ENCODE measurements at regions of chr15 and their contacts with region 1.

Region 1: GRCh38 chr15:66251790-66252684 is 1.5 kb downstream of the MEGF11 start:
- DNase-seq: peak in 4 of 5 donors; percentile 21 to 40 (median 29)
- H3K4me3 ChIP-seq: peak overlapping the region; percentile 47 to 52
- H3K4me3 Mint-ChIP-seq: peak overlapping the region; percentile 74 to 86 (median 80)
- H3K27ac ChIP-seq: no peak overlapping the region
- H3K27ac Mint-ChIP-seq: peak overlapping the region in 1 of 7 donors; percentile 11
- H3K4me1 ChIP-seq: peaks cover 23% of the 10 kb centered on the region
- H3K4me1 Mint-ChIP-seq: peaks cover 4 to 34% (median 13%) of the 10 kb centered on the region in 4 donors
- H3K27me3 ChIP-seq: peaks cover 48% of the 10 kb centered on the region
- H3K27me3 Mint-ChIP-seq: peaks cover 43 to 45% of the 10 kb centered on the region in 2 donors

Region 2: DNA sequence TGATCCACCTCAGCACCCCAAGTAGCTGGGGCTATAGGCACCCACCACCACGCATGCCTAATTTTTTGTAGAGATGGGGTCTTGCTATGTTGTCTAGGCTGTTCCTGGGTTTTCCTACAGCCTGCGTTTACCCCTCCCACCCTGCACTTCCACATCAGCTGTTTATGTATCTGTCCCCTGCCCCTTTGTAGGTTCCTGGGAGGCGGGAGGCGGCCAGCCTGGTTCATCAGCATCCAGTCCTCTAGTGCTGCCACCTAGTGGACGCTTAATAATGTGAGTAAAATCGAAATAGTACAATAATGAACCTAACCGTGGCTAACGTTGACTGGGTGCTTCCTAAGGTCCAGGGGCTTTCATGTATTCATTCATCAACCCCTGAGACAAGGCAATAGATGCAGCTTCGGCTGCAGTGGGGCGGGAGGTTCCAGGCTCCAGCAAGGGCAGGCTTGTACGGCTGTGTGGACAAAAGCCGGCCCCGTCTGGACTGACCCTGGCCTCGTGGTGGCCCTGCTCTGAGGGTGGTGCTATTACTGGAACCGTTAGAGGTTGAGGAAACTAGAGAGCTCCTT is 315.0 kb after region 1 on chr15:
- CTCF ChIA-PET with region 1: no interaction called
- POLR2A ChIA-PET with region 1: no interaction called
- intact Hi-C with region 1: loop called (anchors 2 kb)
- DNase-seq: peak; percentile 40 to 48 (median 46)
- H3K4me3 ChIP-seq: no peak overlapping the region
- H3K4me3 Mint-ChIP-seq: peak overlapping the region in 3 of 8 donors; percentile 29 to 72 (median 41)
- H3K27ac ChIP-seq: no peak overlapping the region
- H3K27ac Mint-ChIP-seq: peak overlapping the region in 2 of 7 donors; percentile 2 to 88
- H3K4me1 ChIP-seq: peaks cover 5% of the 10 kb centered on the region
- H3K4me1 Mint-ChIP-seq: peaks cover 4 to 7% (median 6%) of the 10 kb centered on the region in 4 donors
- H3K27me3 ChIP-seq: no peaks in the 10 kb centered on the region
- H3K27me3 Mint-ChIP-seq: no peaks in the 10 kb centered on the region

Measured in CD4-positive, alpha-beta memory T cell (primary cell).